ENCODE measurements at regions of chr1 and their contacts with region 1.

Region 1: GRCh38 chr1:102970498-102971078 is 137.7 kb downstream of the COL11A1 start:
- DNase-seq: peak; percentile 12
- H3K4me3 ChIP-seq: no peak overlapping the region
- CTCF ChIP-seq: peak; percentile 50

Region 2: DNA sequence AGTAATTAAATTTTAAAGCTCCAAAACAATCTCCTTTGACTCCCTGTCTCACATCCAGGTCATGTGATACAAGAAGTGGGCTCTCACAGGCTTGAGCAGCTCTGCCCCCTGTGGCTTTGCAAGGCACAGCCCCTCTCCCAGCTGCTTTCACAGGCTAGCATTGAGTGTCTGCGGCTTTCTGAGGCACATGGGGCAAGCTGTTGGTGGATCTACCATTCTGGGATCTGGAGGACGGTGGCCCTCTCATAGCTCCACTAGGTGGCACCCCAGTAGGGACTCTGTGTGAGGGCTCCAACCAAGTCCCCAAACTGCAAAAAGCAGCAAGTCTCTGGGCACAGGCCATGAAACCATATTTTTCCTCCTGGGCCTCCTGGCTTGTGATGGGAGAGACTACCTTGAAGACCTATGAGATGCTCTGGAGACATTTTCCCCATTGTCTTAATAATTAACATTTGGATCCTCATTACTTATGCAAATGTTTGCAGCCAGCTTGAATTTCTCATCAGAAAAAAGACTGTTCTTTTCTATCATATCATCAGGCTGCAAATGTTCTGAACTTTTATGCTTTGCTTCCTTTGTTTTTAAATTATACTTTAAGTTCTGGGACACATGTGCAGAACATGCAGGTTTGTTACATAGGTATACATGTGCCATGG is 419.7 kb before region 1 on chr1:
- CTCF ChIA-PET with region 1: interaction called, 16 read pairs
- POLR2A ChIA-PET with region 1: no interaction called
- DNase-seq: no peak
- H3K4me3 ChIP-seq: no peak overlapping the region
- CTCF ChIP-seq: peak; percentile 55

Region 3: GRCh38 chr1:102941377-102941798 is 29.2 kb before region 1 on chr1:
- CTCF ChIA-PET with region 1: interaction called, 10 read pairs
- POLR2A ChIA-PET with region 1: no interaction called
- DNase-seq: peak; percentile 19
- H3K4me3 ChIP-seq: no peak overlapping the region
- CTCF ChIP-seq: no peak

Region 4: DNA sequence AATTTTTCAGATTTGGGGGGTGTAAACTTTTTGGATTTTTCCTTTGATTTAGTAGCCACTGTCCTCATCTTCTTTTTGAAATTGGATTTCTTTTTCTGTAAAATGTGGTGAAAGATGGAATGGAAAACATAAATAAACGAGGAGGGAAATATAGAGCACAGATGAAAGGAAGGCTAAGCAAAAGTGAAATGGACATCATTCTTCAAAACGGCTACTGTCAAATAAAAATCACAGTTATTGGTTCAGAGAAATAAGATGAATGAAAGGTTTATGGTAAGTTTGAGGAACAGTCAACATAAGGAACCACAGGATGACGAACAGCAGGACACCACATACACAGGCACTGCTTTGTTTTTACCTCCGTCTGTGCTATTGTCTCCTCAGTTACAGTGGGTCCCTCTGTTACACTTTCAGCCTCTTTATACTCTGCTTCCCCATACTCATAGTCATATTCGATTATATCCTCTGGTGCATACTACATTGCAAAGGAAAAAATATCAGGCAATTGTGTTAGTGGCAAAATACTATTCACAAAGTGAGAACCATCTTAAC is 55.3 kb after region 1 on chr1:
- CTCF ChIA-PET with region 1: no interaction called
- POLR2A ChIA-PET with region 1: no interaction called
- DNase-seq: no peak
- H3K4me3 ChIP-seq: no peak overlapping the region
- CTCF ChIP-seq: no peak

Region 5: DNA sequence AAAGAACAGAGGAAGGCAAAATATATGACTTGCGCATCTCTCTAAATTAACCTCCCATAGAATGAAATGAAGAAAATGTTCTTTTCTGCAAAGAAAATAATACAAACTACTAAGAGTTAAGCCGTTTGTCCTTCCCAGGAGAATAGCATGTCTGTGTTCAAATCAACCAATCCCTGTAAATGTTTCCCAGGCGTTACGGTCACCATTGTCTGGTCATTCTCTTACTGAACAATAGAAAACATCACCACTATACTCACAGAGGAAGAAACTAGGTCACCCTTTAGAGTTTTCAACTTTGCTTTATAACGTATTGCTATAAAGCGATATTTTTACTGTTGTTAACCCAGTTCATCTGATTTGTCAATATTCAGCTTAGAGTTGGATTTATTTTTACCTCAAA is 103.6 kb after region 1 on chr1:
- CTCF ChIA-PET with region 1: no interaction called
- POLR2A ChIA-PET with region 1: no interaction called
- DNase-seq: no peak
- H3K4me3 ChIP-seq: no peak overlapping the region
- CTCF ChIP-seq: no peak

Region 6: DNA sequence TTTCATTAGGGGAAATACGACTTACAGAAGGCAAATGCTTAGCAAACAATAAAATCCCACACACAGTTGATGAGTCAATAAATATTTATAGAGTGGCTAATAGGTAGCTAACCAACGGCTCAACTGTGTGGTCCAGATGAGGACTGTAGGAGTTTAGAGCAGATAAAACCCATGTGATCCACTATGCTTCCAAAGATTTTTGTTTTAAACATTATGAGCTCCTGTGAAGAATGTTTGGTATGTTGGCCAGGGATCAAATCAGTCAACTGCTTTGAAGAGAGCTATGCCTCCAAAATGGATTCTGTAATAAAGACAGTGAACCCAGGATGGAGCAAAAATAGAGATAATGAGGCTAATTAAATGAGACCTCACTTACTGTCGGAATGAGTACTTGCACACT is 210.1 kb after region 1 on chr1:
- CTCF ChIA-PET with region 1: no interaction called
- POLR2A ChIA-PET with region 1: no interaction called
- DNase-seq: no peak
- H3K4me3 ChIP-seq: no peak overlapping the region
- CTCF ChIP-seq: no peak